Caco-2 (cell line): ENCODE measurements at regions of chr17 and their contacts with region 1.

Region 1: GRCh38 chr17:45317112-45317928 is 500 bp upstream of the MAP3K14 start:
- DNase-seq: peak; percentile 100
- H3K4me3 ChIP-seq: peak overlapping the region; percentile 63
- H3K4me3 Mint-ChIP-seq: peak overlapping the region; percentile 89
- H3K27ac Mint-ChIP-seq: peak overlapping the region; percentile 96
- H3K4me1 ChIP-seq: peaks cover 31% of the 10 kb centered on the region
- H3K4me1 Mint-ChIP-seq: peaks cover 49% of the 10 kb centered on the region
- H3K27me3 ChIP-seq: no peaks in the 10 kb centered on the region
- H3K27me3 Mint-ChIP-seq: no peaks in the 10 kb centered on the region
- CTCF ChIP-seq: peak in 1 of 2 experiments; percentile 5

Region 2: GRCh38 chr17:45247429-45248131 is 69.7 kb before region 1 on chr17:
- CTCF ChIA-PET with region 1: interaction called, 4 read pairs
- POLR2A ChIA-PET with region 1: interaction called, 6 read pairs
- intact Hi-C with region 1: loop called (anchors 1 kb)
- DNase-seq: peak; percentile 99
- H3K4me3 ChIP-seq: peak overlapping the region; percentile 63
- H3K4me3 Mint-ChIP-seq: peak overlapping the region; percentile 81
- H3K27ac Mint-ChIP-seq: peak overlapping the region; percentile 92
- H3K4me1 ChIP-seq: peaks cover 11% of the 10 kb centered on the region
- H3K4me1 Mint-ChIP-seq: peaks cover 10% of the 10 kb centered on the region
- H3K27me3 ChIP-seq: no peaks in the 10 kb centered on the region
- H3K27me3 Mint-ChIP-seq: peaks cover 2% of the 10 kb centered on the region
- CTCF ChIP-seq: no peak

Region 3: DNA sequence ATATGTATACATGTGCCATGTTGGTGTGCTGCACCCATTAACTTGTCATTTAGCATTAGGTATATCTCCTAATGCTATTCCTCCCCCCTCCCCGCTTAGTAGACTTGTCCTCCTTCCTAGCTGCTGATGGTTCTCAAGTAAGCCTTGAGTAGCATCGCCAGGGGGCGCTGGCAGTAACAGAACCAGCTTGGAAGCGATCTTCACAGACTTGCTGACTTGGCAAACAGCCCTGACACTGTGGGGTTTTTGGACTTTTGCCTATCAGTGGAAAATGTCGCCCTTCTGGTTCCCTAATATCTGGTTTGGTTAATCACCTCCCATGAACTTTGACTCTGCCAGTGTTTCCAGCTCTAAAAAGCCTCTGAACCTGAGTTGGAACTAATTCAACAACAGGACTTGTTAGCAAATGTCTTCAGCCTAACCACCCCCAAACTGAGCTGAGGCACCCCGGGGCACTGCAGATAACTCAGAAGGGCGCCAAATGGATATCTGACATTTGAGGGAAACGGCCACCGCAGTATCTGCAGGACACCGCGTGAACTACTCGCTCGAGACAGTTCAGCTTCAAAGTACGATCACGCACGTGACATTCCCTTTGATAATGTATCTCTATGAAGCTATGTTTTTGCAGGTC is 40.0 kb before region 1 on chr17:
- CTCF ChIA-PET with region 1: interaction called, 30 read pairs
- POLR2A ChIA-PET with region 1: interaction called, 5 read pairs
- intact Hi-C with region 1: loop called (anchors 1 kb)
- DNase-seq: peak; percentile 94 to 95
- H3K4me3 ChIP-seq: no peak overlapping the region
- H3K4me3 Mint-ChIP-seq: peak overlapping the region; percentile 41
- H3K27ac Mint-ChIP-seq: peak overlapping the region; percentile 61
- H3K4me1 ChIP-seq: peaks cover 11% of the 10 kb centered on the region
- H3K4me1 Mint-ChIP-seq: peaks cover 12% of the 10 kb centered on the region
- H3K27me3 ChIP-seq: no peaks in the 10 kb centered on the region
- H3K27me3 Mint-ChIP-seq: no peaks in the 10 kb centered on the region
- CTCF ChIP-seq: peak; percentile 88 to 96

Region 4: DNA sequence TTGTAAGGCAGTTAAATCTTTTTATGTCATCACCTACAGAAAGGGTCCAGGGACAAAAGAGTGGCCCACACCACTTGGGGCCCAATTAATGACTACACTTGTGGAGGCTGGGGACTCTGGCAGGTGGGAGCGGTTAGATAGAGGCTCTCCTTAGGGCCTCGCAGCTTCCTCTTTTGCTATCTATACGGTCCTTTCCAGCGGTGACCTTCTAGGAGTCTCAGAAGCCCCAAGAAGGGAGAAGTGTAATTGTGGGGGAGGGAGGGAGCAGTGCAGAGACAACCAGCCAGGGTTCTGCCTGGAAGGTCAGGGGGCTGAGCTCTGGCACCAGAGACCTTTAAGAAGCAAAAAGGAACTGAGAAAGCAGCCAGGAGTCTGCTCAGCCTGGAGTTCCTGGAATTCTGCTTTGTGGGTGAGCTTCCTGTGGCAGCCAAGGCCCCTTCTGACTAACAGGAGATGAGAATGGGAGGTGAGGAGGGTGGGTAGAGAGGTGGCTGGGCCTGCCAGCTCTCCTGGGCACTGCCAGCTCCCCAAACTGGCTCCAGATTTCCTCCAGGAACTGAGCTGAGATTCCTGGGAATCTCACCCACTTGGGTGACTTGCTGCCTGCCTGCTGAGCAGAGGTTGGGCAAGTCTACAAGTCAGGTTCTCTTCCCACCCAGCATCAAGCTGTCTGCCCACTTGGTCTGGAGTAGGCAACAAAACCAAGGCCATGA is 15.8 kb after region 1 on chr17:
- CTCF ChIA-PET with region 1: interaction called, 4 read pairs
- POLR2A ChIA-PET with region 1: interaction called, 13 read pairs
- intact Hi-C with region 1: no loop called
- DNase-seq: peak in 1 of 2 experiments; percentile 19
- H3K4me3 ChIP-seq: no peak overlapping the region
- H3K4me3 Mint-ChIP-seq: no peak overlapping the region
- H3K27ac Mint-ChIP-seq: no peak overlapping the region
- H3K4me1 ChIP-seq: no peaks in the 10 kb centered on the region
- H3K4me1 Mint-ChIP-seq: no peaks in the 10 kb centered on the region
- H3K27me3 ChIP-seq: no peaks in the 10 kb centered on the region
- H3K27me3 Mint-ChIP-seq: no peaks in the 10 kb centered on the region
- CTCF ChIP-seq: no peak

Region 5: DNA sequence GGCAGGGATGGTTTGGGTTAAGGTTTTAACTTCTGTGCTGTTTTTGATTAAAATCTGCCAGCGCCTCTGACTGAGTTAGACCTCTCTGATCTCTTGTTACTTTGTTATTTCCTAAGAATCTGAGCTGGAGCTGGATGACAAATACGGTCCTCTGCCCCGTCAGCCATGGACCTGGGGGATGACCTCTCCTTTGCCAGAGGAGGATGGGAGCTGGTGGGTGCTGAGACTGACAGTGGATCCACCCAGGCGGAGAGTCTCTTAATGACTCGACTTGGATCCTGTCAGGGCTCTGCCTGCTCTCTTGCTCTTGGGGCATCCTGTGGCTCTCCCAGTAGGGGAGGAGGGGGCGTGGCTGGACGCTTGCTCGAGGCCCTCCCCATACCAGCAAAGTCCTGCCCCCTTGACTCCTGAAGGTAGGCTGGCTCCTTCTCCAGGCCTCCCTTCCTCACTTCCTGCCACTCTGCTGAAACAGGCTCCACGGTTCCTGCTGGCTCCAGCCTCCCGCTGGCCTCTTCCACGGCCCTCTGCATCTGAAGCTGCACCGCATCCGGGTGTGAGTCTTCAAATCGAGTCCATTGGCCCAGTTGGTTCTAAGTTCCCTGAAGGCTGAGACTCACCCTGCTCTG is 24.3 kb after region 1 on chr17:
- CTCF ChIA-PET with region 1: interaction called, 4 read pairs
- POLR2A ChIA-PET with region 1: interaction called, 4 read pairs
- intact Hi-C with region 1: loop called (anchors 2 kb)
- DNase-seq: peak; percentile 65 to 74
- H3K4me3 ChIP-seq: no peak overlapping the region
- H3K4me3 Mint-ChIP-seq: no peak overlapping the region
- H3K27ac Mint-ChIP-seq: no peak overlapping the region
- H3K4me1 ChIP-seq: no peaks in the 10 kb centered on the region; the same call in 1 of the 2 replicates
- H3K4me1 Mint-ChIP-seq: peaks cover 10% of the 10 kb centered on the region
- H3K27me3 ChIP-seq: no peaks in the 10 kb centered on the region
- H3K27me3 Mint-ChIP-seq: no peaks in the 10 kb centered on the region
- CTCF ChIP-seq: no peak

Region 6: GRCh38 chr17:45371414-45372327 is 54.4 kb after region 1 on chr17:
- CTCF ChIA-PET with region 1: interaction called, 13 read pairs
- POLR2A ChIA-PET with region 1: interaction called, 66 read pairs
- intact Hi-C with region 1: loop called (anchors 1 kb)
- DNase-seq: peak; percentile 95 to 96
- H3K4me3 ChIP-seq: peak overlapping the region; percentile 35
- H3K4me3 Mint-ChIP-seq: peak overlapping the region; percentile 74
- H3K27ac Mint-ChIP-seq: peak overlapping the region; percentile 96
- H3K4me1 ChIP-seq: peaks cover 39% of the 10 kb centered on the region
- H3K4me1 Mint-ChIP-seq: peaks cover 27% of the 10 kb centered on the region
- H3K27me3 ChIP-seq: no peaks in the 10 kb centered on the region
- H3K27me3 Mint-ChIP-seq: no peaks in the 10 kb centered on the region
- CTCF ChIP-seq: no peak